Esophagus muscularis mucosa (tissue), 4 donors: ENCODE measurements at regions of chr14 and their contacts with region 1.

Region 1: DNA sequence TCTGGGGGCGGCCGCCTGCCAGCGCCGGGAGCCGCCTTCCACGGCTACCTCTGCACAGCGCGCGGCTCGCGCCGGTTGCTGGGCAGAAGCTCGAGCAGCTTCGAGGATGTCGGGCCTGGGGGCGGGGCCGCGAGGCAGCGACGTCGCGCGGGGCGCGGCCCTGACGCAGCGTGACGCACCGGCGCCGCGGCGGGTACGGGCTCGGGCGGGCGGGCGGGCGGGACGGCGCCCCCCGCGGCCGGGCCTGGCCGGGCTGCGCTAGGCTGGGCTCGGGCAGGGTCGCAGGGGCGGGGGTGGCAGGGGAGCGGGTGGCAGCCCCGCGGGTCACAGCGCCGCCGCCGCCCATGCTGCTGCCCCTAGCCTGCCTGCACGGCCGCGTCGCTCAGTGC is at the start of gene BTBD6:
- DNase-seq: peak; percentile 94
- H3K4me3 ChIP-seq: peak within 1 kb of the TSS; percentile 63 to 94 (median 66)
- H3K27ac ChIP-seq: peak within 1 kb of the TSS; percentile 86 to 96 (median 92)
- H3K4me1 ChIP-seq: peaks cover 18 to 35% (median 32%) of the 10 kb centered on the region in 4 donors
- H3K27me3 ChIP-seq: no peaks in the 10 kb centered on the region
- CTCF ChIP-seq: no peak
- EP300 ChIP-seq: no peak
- POLR2A ChIP-seq: no peak
- total RNA-seq, gene BTBD6: 56.1 to 72.5 (median 69.4) TPM

Region 2: GRCh38 chr14:105314287-105315200 is 66.2 kb after region 1 on chr14 and contains the start of gene PACS2:
- intact Hi-C with region 1: loop called (anchors 10 kb)
- DNase-seq: no peak
- H3K4me3 ChIP-seq: peak within 1 kb of the TSS; percentile 76 to 98 (median 92)
- H3K27ac ChIP-seq: peak within 1 kb of the TSS; percentile 90 to 99 (median 98)
- H3K4me1 ChIP-seq: peaks cover 36 to 54% (median 46%) of the 10 kb centered on the region in 4 donors
- H3K27me3 ChIP-seq: no peaks in the 10 kb centered on the region
- CTCF ChIP-seq: no peak
- EP300 ChIP-seq: no peak
- POLR2A ChIP-seq: no peak
- total RNA-seq, gene PACS2: 59.8 to 97.4 (median 71.2) TPM

Region 3: GRCh38 chr14:105330491-105330895 is 82.1 kb after region 1 on chr14:
- intact Hi-C with region 1: no loop called
- DNase-seq: no peak
- H3K4me3 ChIP-seq: no peak overlapping the region
- H3K27ac ChIP-seq: peak overlapping the region in 3 of 4 donors; percentile 0 to 31 (median 5)
- H3K4me1 ChIP-seq: peaks cover 61 to 88% (median 75%) of the 10 kb centered on the region in 4 donors
- H3K27me3 ChIP-seq: no peaks in the 10 kb centered on the region
- CTCF ChIP-seq: no peak
- EP300 ChIP-seq: no peak
- POLR2A ChIP-seq: no peak